Activated naive CD4-positive, alpha-beta T cell treated with anti-CD3 and anti-CD28 coated beads, Interleukin-2, amount 10 ng/mL, durations not matched to agents 7 days and 5 days (primary cell): ENCODE measurements at regions of chr17 and their contacts with region 1.

Region 1: DNA sequence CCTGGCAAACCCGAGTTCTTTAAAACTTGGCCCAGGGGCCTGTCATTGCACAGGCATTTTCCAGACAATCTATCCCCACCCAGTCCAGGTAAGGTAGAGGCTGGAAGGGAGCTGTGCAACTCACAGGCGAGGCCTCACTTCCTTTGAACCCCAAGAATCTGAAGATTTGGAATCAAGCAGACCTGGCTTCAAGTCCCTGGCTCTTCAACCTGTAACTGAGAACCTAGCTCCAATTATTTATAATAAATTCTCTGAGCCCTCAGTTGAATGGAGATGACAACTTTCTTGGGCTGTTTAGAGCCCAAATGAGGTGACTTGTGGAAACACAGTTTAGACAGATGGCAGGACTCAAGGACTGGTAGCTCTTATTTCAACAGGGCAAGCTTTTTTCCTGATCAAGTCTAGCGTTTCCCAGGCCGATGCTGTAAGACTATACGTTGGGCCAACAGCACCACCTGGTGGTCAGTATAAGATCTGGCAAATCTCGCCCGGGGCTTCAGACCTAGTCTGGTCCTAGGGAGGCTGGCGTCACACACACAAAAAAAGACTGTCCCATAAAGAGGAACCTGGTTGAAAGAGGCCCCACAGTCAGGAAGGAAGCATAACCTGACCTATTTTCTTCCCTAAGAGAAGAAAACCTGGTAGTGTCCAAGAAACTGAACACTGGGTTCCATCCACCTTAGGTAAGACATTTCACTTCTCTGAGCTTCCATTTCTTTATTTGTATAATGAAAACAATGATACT is 117.9 kb downstream of the C17orf67 start:
- DNase-seq: peak; percentile 84
- H3K4me3 Mint-ChIP-seq: no peak overlapping the region
- H3K27ac Mint-ChIP-seq: no peak overlapping the region
- H3K4me1 Mint-ChIP-seq: peaks cover 23% of the 10 kb centered on the region
- H3K27me3 Mint-ChIP-seq: peaks cover 5% of the 10 kb centered on the region

Region 2: GRCh38 chr17:56592487-56593085 is 123.2 kb before region 1 on chr17:
- CTCF ChIA-PET with region 1: interaction called, 93 read pairs
- DNase-seq: peak; percentile 69
- H3K4me3 Mint-ChIP-seq: peak overlapping the region; percentile 69
- H3K27ac Mint-ChIP-seq: no peak overlapping the region
- H3K4me1 Mint-ChIP-seq: peaks cover 32% of the 10 kb centered on the region
- H3K27me3 Mint-ChIP-seq: peaks cover 87% of the 10 kb centered on the region

Region 3: GRCh38 chr17:56653877-56654276 is 61.9 kb before region 1 on chr17:
- CTCF ChIA-PET with region 1: interaction called, 21 read pairs
- DNase-seq: peak; percentile 80
- H3K4me3 Mint-ChIP-seq: no peak overlapping the region
- H3K27ac Mint-ChIP-seq: no peak overlapping the region
- H3K4me1 Mint-ChIP-seq: peaks cover 4% of the 10 kb centered on the region
- H3K27me3 Mint-ChIP-seq: peaks cover 20% of the 10 kb centered on the region

Region 4: DNA sequence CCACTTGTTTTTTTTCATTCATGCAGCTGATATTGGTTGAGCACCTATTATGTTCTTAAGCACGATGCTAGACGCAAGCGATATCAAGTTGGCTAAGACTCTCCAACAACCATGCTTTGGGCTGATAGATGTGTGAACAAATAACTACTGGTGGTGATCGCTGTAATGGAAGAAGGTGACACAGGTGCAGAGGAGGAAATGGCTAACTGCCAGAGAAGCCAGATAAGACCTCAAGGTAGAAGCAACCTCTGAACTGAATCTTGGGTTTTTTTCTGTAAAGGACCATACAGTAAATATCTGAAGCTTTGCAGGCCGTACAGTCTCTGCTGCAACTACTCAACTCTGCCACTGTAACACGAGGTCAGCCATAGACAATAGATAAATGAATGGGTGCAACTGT is 20.1 kb after region 1 on chr17:
- CTCF ChIA-PET with region 1: interaction called, 11 read pairs
- DNase-seq: no peak
- H3K4me3 Mint-ChIP-seq: no peak overlapping the region
- H3K27ac Mint-ChIP-seq: no peak overlapping the region
- H3K4me1 Mint-ChIP-seq: no peaks in the 10 kb centered on the region
- H3K27me3 Mint-ChIP-seq: peaks cover 12% of the 10 kb centered on the region

Region 5: GRCh38 chr17:56779898-56780733 is 64.3 kb after region 1 on chr17:
- CTCF ChIA-PET with region 1: interaction called, 80 read pairs
- DNase-seq: peak; percentile 89
- H3K4me3 Mint-ChIP-seq: peak overlapping the region; percentile 87
- H3K27ac Mint-ChIP-seq: peak overlapping the region; percentile 98
- H3K4me1 Mint-ChIP-seq: peaks cover 30% of the 10 kb centered on the region
- H3K27me3 Mint-ChIP-seq: peaks cover 9% of the 10 kb centered on the region